MCF 10A (cell line): ENCODE measurements at regions of chr11 and their contacts with region 1.

Region 1: DNA sequence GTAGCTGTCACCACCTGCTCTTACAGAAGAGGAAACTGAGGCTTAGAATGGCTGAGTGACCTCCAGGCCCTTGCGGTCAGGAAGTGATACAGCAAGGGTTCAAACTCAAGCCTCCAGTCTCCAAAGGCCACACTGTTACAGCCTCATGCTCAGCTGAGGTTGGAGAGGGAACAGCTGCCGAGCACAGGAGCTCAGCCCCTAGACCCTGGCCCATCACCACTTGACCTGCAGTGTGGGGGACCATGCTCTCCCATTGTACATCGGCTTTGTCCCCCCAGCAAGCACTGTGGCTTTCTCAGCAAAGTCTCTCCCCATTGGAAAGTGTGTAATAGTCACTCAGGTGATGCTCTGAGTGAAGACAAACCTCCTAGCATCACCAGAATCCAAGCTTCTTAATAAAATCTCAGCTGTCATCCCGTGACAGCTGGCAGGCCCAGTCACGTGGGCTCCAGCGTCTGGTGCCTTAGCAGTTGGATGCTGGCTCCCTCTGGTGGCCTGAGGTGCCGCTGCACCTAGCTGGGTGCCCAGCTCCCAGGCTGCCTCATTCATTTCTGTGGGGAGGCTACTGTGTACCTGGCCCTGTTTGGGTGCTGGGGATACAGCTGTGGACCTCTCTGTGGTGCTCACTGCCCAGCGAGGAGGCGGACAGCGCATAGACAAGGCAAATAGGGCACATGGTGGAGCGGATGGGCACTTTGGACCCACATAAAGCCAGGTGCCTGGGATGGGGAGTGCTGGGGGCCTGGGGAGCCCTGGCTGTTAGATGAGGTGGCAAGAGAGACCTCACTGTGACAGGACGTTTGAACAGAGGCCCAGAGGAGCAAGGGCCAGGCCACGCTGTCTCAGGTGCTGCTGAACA is 19.1 kb upstream of the MYRF start:
- DNase-seq: peak; percentile 86
- H3K4me3 Mint-ChIP-seq: no peak overlapping the region
- H3K27ac Mint-ChIP-seq: no peak overlapping the region
- H3K4me1 Mint-ChIP-seq: peaks cover 23% of the 10 kb centered on the region
- H3K27me3 Mint-ChIP-seq: no peaks in the 10 kb centered on the region
- CTCF ChIP-seq: peak; percentile 94

Region 2: GRCh38 chr11:61509043-61510029 is 224.0 kb before region 1 on chr11:
- CTCF ChIA-PET with region 1: no interaction called
- POLR2A ChIA-PET with region 1: no interaction called
- intact Hi-C with region 1: no loop called
- DNase-seq: no peak
- H3K4me3 Mint-ChIP-seq: no peak overlapping the region
- H3K27ac Mint-ChIP-seq: no peak overlapping the region
- H3K4me1 Mint-ChIP-seq: no peaks in the 10 kb centered on the region
- H3K27me3 Mint-ChIP-seq: peaks cover 8% of the 10 kb centered on the region
- CTCF ChIP-seq: no peak

Region 3: DNA sequence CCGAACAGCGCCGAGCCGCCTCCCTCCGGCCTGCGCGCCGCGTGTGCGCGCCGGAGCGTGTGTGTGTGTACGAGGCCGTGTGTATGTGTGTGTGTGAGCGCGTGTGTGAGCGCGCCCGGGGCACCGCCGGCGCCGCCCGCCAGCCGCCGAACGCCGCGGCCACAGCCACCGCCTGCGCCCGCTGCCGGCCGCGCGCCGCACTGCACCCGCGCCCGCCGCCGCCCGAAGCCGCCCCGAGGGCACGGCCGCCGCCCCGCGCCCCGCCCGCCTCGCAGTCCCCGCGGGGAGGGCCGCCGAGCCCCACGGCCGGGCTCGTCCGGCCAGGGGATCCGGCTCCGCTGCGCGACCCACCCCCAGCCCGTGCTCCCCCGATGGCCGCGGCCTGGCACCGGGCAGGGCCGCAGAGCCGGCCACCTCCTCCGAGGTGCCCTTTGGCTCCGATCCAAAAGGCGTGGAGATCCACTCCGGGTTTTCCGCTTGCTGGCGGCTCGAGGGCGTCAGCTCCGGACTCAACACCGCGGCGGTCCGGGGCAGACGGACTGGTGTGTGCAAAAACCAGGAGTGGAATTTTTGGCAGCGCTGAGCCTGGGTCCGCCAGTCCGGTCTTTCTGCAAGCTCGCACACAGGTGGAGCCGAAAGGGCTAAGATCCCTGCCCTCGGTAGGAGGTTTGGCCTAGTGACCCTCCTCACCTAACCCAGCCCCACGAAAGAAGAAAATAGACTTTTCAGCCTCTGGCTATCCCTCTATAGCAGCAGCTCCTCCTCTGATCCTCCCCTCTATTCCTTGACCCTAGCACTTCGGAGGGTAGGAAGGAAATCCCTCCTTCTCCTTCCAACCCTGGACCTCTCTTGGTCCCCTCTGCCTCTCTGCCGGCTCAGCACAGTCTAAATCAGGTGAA is 152.1 kb before region 1 on chr11 and contains the start of gene SYT7:
- CTCF ChIA-PET with region 1: no interaction called
- POLR2A ChIA-PET with region 1: no interaction called
- intact Hi-C with region 1: no loop called
- DNase-seq: peak; percentile 95
- H3K4me3 Mint-ChIP-seq: peak within 1 kb of the TSS; percentile 71
- H3K27ac Mint-ChIP-seq: no peak within 1 kb of the TSS
- H3K4me1 Mint-ChIP-seq: peaks cover 12% of the 10 kb centered on the region
- H3K27me3 Mint-ChIP-seq: no peaks in the 10 kb centered on the region
- CTCF ChIP-seq: no peak
- total RNA-seq, gene SYT7: 25.2 and 57.7 TPM in 2 replicates

Region 4: GRCh38 chr11:61627567-61628445 is 105.5 kb before region 1 on chr11:
- CTCF ChIA-PET with region 1: interaction called, 10 read pairs
- POLR2A ChIA-PET with region 1: no interaction called
- intact Hi-C with region 1: no loop called
- DNase-seq: peak; percentile 75
- H3K4me3 Mint-ChIP-seq: no peak overlapping the region
- H3K27ac Mint-ChIP-seq: peak overlapping the region; percentile 54
- H3K4me1 Mint-ChIP-seq: peaks cover 12% of the 10 kb centered on the region
- H3K27me3 Mint-ChIP-seq: no peaks in the 10 kb centered on the region
- CTCF ChIP-seq: peak; percentile 94

Region 5: DNA sequence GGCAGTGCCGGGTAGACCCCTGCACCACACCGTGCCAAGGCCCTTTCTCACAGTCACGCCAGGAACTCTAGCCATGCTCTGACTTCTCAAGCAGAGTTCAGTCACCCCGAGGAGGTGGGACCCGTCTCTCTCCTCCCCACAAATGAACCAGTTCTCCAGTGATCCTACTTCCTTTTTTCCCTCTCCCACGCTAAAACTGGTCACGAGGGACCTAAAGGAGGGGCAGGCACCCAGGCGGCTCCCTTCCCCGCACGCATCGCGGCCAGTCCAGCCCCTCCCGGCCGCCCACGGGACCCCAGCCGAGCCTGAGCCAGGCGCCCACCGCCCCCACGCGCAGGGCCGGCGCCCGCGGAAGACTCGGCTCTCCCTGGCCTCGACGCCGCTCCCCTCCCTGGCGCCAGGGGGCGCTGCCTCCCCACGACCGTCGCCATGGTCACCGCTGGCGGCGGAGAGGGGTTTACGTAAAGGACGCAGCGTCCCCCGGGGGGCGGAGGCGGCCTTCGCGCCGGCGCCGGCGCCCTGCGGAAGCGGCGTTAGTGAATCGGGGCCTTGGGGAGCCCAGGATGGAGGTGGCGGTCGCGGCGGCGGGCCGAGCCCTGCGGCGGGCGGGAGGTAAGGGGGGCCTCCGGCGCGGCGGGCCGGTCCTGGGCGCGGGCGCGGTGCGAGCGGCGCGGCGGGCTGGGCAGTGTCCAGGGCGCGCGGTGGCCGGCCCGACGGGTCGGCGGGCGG is 53.3 kb before region 1 on chr11 and contains the start of gene DAGLA:
- CTCF ChIA-PET with region 1: interaction called, 61 read pairs
- POLR2A ChIA-PET with region 1: interaction called, 3 read pairs
- intact Hi-C with region 1: loop called (anchors 1 kb)
- DNase-seq: peak; percentile 51
- H3K4me3 Mint-ChIP-seq: peak within 1 kb of the TSS; percentile 68
- H3K27ac Mint-ChIP-seq: no peak within 1 kb of the TSS
- H3K4me1 Mint-ChIP-seq: no peaks in the 10 kb centered on the region
- H3K27me3 Mint-ChIP-seq: peaks cover 47% of the 10 kb centered on the region
- CTCF ChIP-seq: peak; percentile 95
- total RNA-seq, gene DAGLA: 1.0 and 1.5 TPM in 2 replicates

Region 6: GRCh38 chr11:61701242-61701886 is 32.0 kb before region 1 on chr11:
- CTCF ChIA-PET with region 1: interaction called, 24 read pairs
- POLR2A ChIA-PET with region 1: interaction called, 9 read pairs
- intact Hi-C with region 1: loop called (anchors 1 kb)
- DNase-seq: no peak
- H3K4me3 Mint-ChIP-seq: no peak overlapping the region
- H3K27ac Mint-ChIP-seq: no peak overlapping the region
- H3K4me1 Mint-ChIP-seq: peaks cover 29% of the 10 kb centered on the region
- H3K27me3 Mint-ChIP-seq: peaks cover 10% of the 10 kb centered on the region
- CTCF ChIP-seq: no peak

Region 7: DNA sequence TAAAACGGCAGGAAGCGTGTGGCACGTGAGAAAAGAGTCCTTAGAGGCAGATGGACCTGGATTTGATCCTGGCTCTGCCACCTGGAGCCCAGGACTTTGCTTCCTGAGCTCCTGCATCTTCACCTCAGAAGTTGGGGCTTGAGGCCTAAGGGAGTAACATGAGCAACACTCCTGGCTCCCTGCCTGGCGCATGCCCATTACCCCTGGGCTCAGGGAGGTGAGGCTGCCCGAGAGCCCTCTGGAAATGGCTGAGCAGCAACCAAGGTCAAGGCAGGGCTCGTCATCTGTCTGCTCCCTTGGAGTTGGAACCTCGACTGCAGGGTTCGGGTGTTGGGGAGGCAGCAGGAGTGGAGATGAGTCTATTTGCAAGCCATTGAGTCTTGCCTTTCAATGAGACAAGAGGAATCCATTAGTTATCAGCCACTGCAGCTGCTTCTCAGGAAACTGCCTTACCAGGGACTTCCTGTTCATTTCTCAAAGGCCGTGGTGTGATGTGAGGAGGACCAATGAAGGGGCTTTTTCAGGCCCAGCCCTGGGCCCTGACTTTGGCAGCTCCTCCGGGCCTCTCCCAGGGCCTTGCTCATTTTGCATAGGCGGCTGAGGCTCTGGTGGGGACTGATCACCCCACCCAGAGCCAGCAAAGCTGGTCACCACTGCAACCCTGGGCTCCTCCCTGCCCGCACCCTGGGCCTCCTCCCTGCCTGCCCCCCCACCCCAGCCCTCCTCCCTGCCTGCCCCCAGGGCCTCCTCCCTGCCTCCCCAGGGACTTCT is 101.1 kb after region 1 on chr11:
- CTCF ChIA-PET with region 1: no interaction called
- POLR2A ChIA-PET with region 1: no interaction called
- intact Hi-C with region 1: no loop called
- DNase-seq: peak; percentile 49
- H3K4me3 Mint-ChIP-seq: no peak overlapping the region
- H3K27ac Mint-ChIP-seq: no peak overlapping the region
- H3K4me1 Mint-ChIP-seq: peaks cover 8% of the 10 kb centered on the region
- H3K27me3 Mint-ChIP-seq: no peaks in the 10 kb centered on the region
- CTCF ChIP-seq: no peak